ENCODE measurements at regions of chr15 and their contacts with region 1.

Region 1: GRCh38 chr15:75508840-75509532 is 57.5 kb upstream of the SIN3A start:
- DNase-seq: peak; percentile 23
- ATAC-seq: peak; percentile 58
- H3K4me3 Mint-ChIP-seq: no peak overlapping the region
- H3K27ac Mint-ChIP-seq: no peak overlapping the region
- H3K4me1 Mint-ChIP-seq: no peaks in the 10 kb centered on the region
- H3K27me3 Mint-ChIP-seq: no peaks in the 10 kb centered on the region
- CTCF ChIP-seq: peak; percentile 57

Region 2: GRCh38 chr15:75493732-75494131 is 15.3 kb before region 1 on chr15:
- CTCF ChIA-PET with region 1: interaction called, 11 read pairs
- POLR2A ChIA-PET with region 1: no interaction called
- intact Hi-C with region 1: no loop called
- DNase-seq: no peak
- ATAC-seq: no peak
- H3K4me3 Mint-ChIP-seq: no peak overlapping the region
- H3K27ac Mint-ChIP-seq: no peak overlapping the region
- H3K4me1 Mint-ChIP-seq: no peaks in the 10 kb centered on the region
- H3K27me3 Mint-ChIP-seq: no peaks in the 10 kb centered on the region
- CTCF ChIP-seq: no peak

Region 3: GRCh38 chr15:75647370-75648155 is 138.6 kb after region 1 on chr15 and contains the start of gene SNX33:
- CTCF ChIA-PET with region 1: interaction called, 10 read pairs
- POLR2A ChIA-PET with region 1: interaction called, 5 read pairs
- intact Hi-C with region 1: no loop called
- DNase-seq: peak; percentile 75
- ATAC-seq: peak; percentile 56
- H3K4me3 Mint-ChIP-seq: peak within 1 kb of the TSS; percentile 79
- H3K27ac Mint-ChIP-seq: peak within 1 kb of the TSS; percentile 60
- H3K4me1 Mint-ChIP-seq: peaks cover 20% of the 10 kb centered on the region
- H3K27me3 Mint-ChIP-seq: no peaks in the 10 kb centered on the region
- CTCF ChIP-seq: peak; percentile 28
- total RNA-seq, gene SNX33: 1.7 to 1.8 TPM